ENCODE measurements at regions of chr19 and their contacts with region 1.

Region 1: DNA sequence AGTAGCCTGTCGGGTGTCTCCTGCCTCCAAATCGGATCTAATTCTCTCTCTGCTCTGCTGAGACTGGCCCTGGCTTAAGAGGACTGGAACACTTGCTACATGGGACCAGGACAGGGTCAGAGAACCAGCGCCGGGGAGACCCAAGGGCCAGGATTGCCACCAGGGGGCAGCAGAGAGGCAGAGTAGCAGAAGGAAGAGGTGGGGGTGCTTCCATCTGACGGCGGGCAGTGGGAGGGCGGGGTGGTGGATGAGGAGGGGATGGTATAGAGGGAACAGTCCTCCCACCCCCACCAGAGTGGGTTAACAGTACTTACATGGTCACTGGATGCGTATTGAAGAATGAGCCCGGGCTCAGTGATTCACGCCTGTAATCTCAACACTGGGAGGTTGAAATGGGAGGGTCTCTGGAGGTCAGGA is 11.9 kb downstream of the SELENOW start:
- DNase-seq: peak; percentile 85 to 94
- ATAC-seq: peak; percentile 91
- H3K4me3 ChIP-seq: no peak overlapping the region
- H3K27ac ChIP-seq: no peak overlapping the region
- H3K4me1 ChIP-seq: no peaks in the 10 kb centered on the region
- CTCF ChIP-seq: peak; percentile 86
- EP300 ChIP-seq: no peak
- POLR2A ChIP-seq: no peak
- RAD21 ChIP-seq: peak; percentile 28 to 46; a peak in 2 of 5 replicates

Region 2: GRCh38 chr19:47707135-47707925 is 83.1 kb before region 1 on chr19:
- CTCF ChIA-PET with region 1: interaction called, 44 read pairs
- POLR2A ChIA-PET with region 1: no interaction called
- DNase-seq: peak; percentile 76 to 93
- ATAC-seq: peak; percentile 94 to 97
- H3K4me3 ChIP-seq: no peak overlapping the region
- H3K27ac ChIP-seq: no peak overlapping the region
- H3K4me1 ChIP-seq: 0 out of 3 replicates have a peak, but pooled peaks cover 5% of the 10 kb centered on the region
- CTCF ChIP-seq: peak; percentile 86
- EP300 ChIP-seq: no peak
- POLR2A ChIP-seq: no peak
- RAD21 ChIP-seq: peak; percentile 90 to 94

Region 3: GRCh38 chr19:47713046-47714021 is 77.1 kb before region 1 on chr19 and contains the start of gene EHD2:
- CTCF ChIA-PET with region 1: interaction called, 40 read pairs
- POLR2A ChIA-PET with region 1: no interaction called
- DNase-seq: peak; percentile 69 to 84
- ATAC-seq: peak; percentile 83 to 92
- H3K4me3 ChIP-seq: peak within 1 kb of the TSS; percentile 89
- H3K27ac ChIP-seq: peak within 1 kb of the TSS; percentile 97 to 99
- H3K4me1 ChIP-seq: peaks cover 4% of the 10 kb centered on the region
- CTCF ChIP-seq: peak; percentile 99
- EP300 ChIP-seq: no peak
- POLR2A ChIP-seq: peak; percentile 82
- RAD21 ChIP-seq: peak; percentile 99 to 100
- polyA plus RNA-seq, gene EHD2: 32.3 and 36.9 TPM in 2 replicates

Region 4: DNA sequence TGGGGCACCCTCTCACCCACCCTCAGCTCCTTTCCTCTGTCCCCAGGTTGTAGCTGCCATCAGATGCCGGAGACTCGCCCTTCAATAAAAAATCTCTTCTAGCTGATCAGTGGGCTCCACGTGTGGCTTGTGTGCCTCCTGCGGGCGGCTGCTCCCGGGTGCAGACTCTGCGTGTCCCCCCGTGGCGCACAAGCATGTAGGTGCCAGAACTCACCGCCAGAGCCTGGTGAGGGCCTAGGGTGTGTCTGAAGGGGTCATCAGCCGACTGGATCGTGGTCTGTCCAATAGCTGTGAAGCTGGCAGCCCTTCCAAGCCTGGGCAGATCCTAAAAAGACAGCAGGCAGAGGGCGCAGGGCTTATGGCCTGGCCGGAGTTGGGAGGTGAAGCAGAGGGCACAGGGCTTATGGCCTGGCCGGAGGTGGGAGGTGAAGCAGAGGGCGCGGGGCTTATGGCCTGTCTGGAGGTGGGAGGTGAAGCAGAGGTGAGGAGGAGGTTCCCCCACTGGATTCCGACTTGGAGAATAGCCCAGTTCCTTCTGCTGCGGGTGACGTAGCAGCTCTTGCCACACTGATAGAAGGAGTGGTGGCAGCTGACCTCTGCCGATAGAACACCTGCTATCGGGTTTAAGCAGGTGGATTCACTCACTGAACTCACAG is 33.3 kb before region 1 on chr19:
- CTCF ChIA-PET with region 1: interaction called, 16 read pairs
- POLR2A ChIA-PET with region 1: no interaction called
- DNase-seq: no peak
- ATAC-seq: peak; percentile 5 to 11; a peak in 3 of 6 replicates
- H3K4me3 ChIP-seq: no peak overlapping the region
- H3K27ac ChIP-seq: no peak overlapping the region
- H3K4me1 ChIP-seq: no peaks in the 10 kb centered on the region; the same call in 2 of the 3 replicates
- CTCF ChIP-seq: no peak
- EP300 ChIP-seq: no peak
- POLR2A ChIP-seq: no peak
- RAD21 ChIP-seq: no peak

Region 5: DNA sequence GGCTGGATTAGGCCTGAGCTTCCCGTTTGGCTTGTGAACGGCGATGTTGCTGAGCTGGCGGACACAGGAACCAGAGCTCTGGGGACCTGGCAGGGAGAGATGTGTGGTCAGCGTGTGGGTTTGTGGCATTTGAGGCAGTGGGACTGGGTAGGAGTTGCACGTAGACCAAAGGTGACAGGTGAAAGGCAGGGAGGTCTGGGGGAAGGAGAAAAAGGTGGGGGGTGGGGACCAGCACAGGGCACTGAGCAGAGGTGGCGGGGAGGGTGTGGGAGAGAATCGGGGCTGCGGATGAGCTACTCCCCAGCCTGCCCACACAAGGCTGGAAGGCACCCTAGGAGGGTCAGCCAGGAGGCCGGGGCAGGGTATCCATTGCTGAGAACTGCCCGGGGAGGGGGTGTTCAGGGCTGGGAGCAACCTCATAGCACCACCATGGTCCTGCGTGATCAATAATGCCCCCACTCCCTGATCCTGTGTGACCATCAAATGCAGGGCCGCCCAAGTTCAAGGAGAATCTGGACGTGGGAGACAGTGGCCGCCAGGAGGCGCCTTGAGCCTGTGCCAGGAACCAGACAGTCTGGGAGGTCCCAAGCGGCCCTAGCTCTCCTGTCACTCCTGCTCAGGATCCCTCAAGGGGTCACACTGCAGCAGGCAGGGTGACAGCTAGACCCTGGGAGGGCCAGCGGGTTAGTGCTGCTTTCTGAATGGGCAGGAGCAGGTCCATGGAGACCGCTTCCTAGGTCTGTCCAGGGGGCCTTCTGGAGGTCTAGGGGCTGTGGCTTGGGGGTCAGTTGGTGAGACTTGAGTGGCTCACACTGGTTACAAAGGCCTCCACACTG is 24.7 kb before region 1 on chr19:
- CTCF ChIA-PET with region 1: interaction called, 133 read pairs
- POLR2A ChIA-PET with region 1: interaction called, 5 read pairs
- DNase-seq: peak; percentile 58 to 74
- ATAC-seq: peak; percentile 66 to 85
- H3K4me3 ChIP-seq: no peak overlapping the region
- H3K27ac ChIP-seq: no peak overlapping the region
- H3K4me1 ChIP-seq: no peaks in the 10 kb centered on the region
- CTCF ChIP-seq: peak; percentile 83
- EP300 ChIP-seq: no peak
- POLR2A ChIP-seq: no peak
- RAD21 ChIP-seq: peak; percentile 61 to 84

Region 6: GRCh38 chr19:47778089-47778953 is 12.1 kb before region 1 on chr19 and contains the start of gene SELENOW:
- CTCF ChIA-PET with region 1: interaction called, 41 read pairs
- POLR2A ChIA-PET with region 1: interaction called, 3 read pairs
- DNase-seq: peak; percentile 83 to 90
- ATAC-seq: peak; percentile 88 to 95
- H3K4me3 ChIP-seq: peak within 1 kb of the TSS; percentile 79
- H3K27ac ChIP-seq: peak within 1 kb of the TSS; percentile 90 to 94
- H3K4me1 ChIP-seq: peaks cover 16% of the 10 kb centered on the region
- CTCF ChIP-seq: no peak
- EP300 ChIP-seq: no peak
- POLR2A ChIP-seq: peak; percentile 99
- RAD21 ChIP-seq: no peak
- polyA plus RNA-seq, gene SELENOW: 114 and 157 TPM in 2 replicates

Region 7: DNA sequence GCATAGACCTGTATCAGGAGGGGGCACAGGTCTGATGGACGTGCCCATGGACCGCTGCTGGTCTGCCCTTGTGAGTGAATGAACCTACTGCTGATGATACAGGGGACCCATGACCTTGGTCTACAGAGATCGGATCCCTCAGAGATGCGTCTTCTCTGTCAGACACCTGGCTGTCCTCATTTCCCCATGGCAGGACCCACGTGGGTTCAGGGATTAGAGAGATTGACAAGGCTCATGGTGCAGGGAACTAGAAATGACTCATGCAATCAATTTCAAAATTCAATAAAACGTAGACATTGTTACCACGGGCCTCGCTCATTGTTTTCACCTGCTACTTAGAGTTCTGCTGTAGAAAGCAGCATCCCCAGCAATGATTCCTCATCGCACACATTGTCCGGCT is 14.9 kb after region 1 on chr19:
- CTCF ChIA-PET with region 1: interaction called, 33 read pairs
- POLR2A ChIA-PET with region 1: no interaction called
- DNase-seq: no peak
- ATAC-seq: peak in 1 of 2 experiments; percentile 24; a peak in 3 of 6 replicates
- H3K4me3 ChIP-seq: no peak overlapping the region
- H3K27ac ChIP-seq: no peak overlapping the region
- H3K4me1 ChIP-seq: no peaks in the 10 kb centered on the region; the same call in 2 of the 3 replicates
- CTCF ChIP-seq: no peak
- EP300 ChIP-seq: no peak
- POLR2A ChIP-seq: no peak
- RAD21 ChIP-seq: no peak